ENCODE measurements at regions of chr4 and their contacts with region 1.

Region 1: DNA sequence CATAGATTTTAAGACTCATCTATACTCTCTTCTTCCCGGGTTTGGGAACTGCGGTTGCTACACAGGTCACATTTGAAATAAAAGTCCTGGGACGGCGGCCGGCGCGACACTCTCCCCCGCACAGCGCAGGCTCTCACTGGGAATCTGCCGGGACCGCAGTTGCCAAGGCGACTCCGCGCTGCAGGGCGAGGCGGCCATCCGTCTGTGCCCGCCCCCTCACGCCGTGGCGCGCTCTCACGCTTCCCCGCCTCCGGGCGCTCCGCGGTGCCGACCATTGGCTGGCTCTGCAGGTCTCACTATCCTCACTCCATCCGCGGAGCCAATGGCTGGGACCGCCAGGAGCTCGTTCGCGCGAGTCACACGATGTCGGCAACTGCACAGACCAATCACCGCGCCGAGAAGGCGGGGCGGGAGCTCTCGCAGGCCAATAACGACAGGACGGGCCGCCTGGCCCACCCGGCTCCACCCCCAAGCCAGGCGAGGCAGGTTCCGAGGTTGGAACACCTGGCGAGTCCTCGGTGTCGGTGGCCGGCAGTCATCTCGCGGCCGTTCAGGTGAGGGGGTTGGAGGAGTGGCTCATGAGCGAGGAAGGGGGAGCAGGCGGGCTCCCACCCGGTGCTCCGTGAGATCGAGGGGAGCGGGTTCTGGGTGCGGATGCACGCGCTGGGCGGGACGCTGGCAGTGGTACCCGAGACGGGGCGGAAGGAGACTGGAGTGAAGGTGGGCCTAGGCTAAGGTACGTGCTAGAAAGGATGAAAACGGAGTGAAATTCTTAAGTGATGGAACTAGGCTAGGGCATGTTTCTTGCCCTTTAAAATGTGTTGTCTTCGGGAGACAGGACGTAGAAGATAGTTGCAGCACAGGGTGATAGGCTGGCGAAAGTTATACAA is at the start of gene MSMO1:
- DNase-seq: peak; percentile 99 to 100 (median 100)
- ATAC-seq: peak; percentile 99 to 100 (median 100)
- H3K4me3 ChIP-seq: peak within 1 kb of the TSS; percentile 76 to 95 (median 83)
- H3K27ac ChIP-seq: peak within 1 kb of the TSS; percentile 46 to 86 (median 71)
- H3K4me1 ChIP-seq: peaks cover 0 to 38% (median 15%) of the 10 kb centered on the region in 12 donors
- H3K27me3 ChIP-seq: no peaks in the 10 kb centered on the region
- CTCF ChIP-seq: no peak
- POLR2A ChIP-seq: peak in 1 of 2 donors; percentile 77
- total RNA-seq, gene MSMO1: 7.1 to 16.9 (median 13.2) TPM

Region 2: GRCh38 chr4:165112368-165113139 is 214.9 kb before region 1 on chr4 and contains the start of gene TMEM192:
- intact Hi-C with region 1: loop called in 3 of 10 experiments (anchors 2 to 5 kb)
- DNase-seq: peak; percentile 93 to 96 (median 94)
- ATAC-seq: peak; percentile 100
- H3K4me3 ChIP-seq: peak within 1 kb of the TSS; percentile 56 to 99 (median 84)
- H3K27ac ChIP-seq: peak within 1 kb of the TSS; percentile 52 to 94 (median 88)
- H3K4me1 ChIP-seq: peaks cover 0 to 16% (median 6%) of the 10 kb centered on the region in 12 donors
- H3K27me3 ChIP-seq: no peaks in the 10 kb centered on the region
- CTCF ChIP-seq: peak in 9 of 12 donors; percentile 17 to 64 (median 34)
- POLR2A ChIP-seq: peak in 1 of 2 donors; percentile 70
- total RNA-seq, gene TMEM192: 12.8 to 21.0 (median 17.7) TPM

Region 3: DNA sequence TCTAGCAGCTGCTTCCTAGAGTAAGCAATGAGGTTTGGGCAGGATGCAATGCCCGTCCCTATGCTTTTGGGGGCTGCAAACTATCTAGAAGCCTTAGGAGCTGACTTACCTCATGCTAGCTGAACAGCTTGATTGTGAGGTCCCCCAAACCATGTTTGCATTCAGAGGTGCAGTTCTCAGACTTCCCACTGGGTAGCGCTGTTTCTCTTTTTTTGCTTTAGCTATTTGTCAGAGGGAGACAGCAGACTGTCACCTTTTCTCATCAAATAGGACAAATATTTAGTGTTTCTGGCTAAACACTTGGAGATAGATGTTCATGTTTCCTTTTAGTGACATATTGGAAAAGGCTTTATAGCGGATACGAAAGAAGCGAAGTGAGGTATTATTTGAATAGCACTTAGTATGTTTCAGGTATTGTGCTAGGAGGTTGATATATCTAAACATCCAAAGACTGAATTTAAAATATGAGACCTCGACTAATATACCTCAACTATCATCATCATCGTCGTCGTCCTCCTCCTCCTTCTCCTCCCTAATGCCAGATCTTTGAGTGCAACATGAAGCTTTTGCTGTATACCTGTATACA is 196.1 kb before region 1 on chr4:
- intact Hi-C with region 1: loop called in 1 of 10 experiments (anchors 5 kb)
- DNase-seq: peak in 2 of 5 donors; percentile 35 to 45
- ATAC-seq: peak in 3 of 4 donors; percentile 64 to 80 (median 65)
- H3K4me3 ChIP-seq: no peak overlapping the region
- H3K27ac ChIP-seq: no peak overlapping the region
- H3K4me1 ChIP-seq: peaks cover 0 to 19% (median 0%) of the 10 kb centered on the region in 12 donors
- H3K27me3 ChIP-seq: peaks cover 0 to 5% (median 0%) of the 10 kb centered on the region in 9 donors
- CTCF ChIP-seq: peak; percentile 78 to 94 (median 82)
- POLR2A ChIP-seq: no peak

Region 4: DNA sequence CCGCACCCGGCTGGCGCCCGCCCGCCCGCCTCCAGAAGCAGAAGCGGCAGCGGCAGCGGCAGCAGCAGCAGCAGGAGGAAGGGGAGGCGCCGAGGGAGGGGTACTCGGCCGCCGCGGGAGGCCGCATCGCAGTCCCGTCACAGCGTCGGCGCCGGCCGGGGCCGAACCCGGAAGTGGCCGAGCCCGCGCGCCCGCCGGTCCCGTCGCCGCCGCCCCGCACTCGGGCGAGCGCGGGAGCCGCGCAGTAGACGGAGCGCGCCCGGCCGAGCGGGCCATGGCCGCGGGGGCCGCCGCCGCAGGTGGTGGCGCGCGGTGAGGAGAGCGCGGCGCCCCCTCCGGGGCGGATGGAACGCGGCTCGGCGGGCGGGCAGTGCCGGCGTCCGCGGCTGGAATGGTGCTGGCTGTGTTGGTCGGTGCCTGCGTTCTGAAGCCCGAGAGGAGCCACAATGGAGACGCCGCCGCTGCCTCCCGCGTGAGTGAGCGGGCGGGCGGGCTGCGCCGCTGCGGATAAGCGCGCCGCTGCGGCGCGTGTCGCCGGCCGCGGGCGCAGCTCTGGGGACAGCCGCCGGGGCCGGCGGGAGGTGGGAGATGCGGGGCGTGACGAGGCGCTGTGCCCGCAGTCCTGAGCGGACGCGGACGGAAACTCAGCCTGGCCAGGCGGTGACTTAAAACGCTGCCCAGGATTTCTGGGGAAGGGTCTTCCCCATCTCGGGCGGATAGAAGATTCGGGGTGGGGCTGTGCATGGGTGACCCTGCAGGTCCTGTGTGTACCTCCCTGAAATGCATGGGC is 119.8 kb before region 1 on chr4 and contains the start of gene KLHL2:
- intact Hi-C with region 1: loop called in 9 of 10 experiments (anchors 1 to 10 kb)
- DNase-seq: peak; percentile 86 to 93 (median 88)
- ATAC-seq: peak; percentile 87 to 97 (median 96)
- H3K4me3 ChIP-seq: peak within 1 kb of the TSS; percentile 59 to 98 (median 86)
- H3K27ac ChIP-seq: peak within 1 kb of the TSS; percentile 70 to 90 (median 81)
- H3K4me1 ChIP-seq: peaks cover 0 to 61% (median 13%) of the 10 kb centered on the region in 12 donors
- H3K27me3 ChIP-seq: no peaks in the 10 kb centered on the region
- CTCF ChIP-seq: peak in 1 of 12 donors; percentile 19
- POLR2A ChIP-seq: peak in 1 of 2 donors; percentile 52
- total RNA-seq, gene KLHL2: 7.2 to 18.6 (median 10.8) TPM

Region 5: GRCh38 chr4:165364452-165365080 is 37.1 kb after region 1 on chr4:
- intact Hi-C with region 1: no loop called
- DNase-seq: no peak
- ATAC-seq: no peak
- H3K4me3 ChIP-seq: no peak overlapping the region
- H3K27ac ChIP-seq: no peak overlapping the region
- H3K4me1 ChIP-seq: peaks cover 0 to 12% (median 0%) of the 10 kb centered on the region in 12 donors
- H3K27me3 ChIP-seq: peaks cover 0 to 14% (median 0%) of the 10 kb centered on the region in 9 donors
- CTCF ChIP-seq: no peak
- POLR2A ChIP-seq: no peak

Measured in heart left ventricle (tissue), 16 donors.